ENCODE measurements at regions of chr1 and their contacts with region 1.

Region 1: GRCh38 chr1:63537940-63538339 is 14.6 kb downstream of the EFCAB7 start:
- DNase-seq: peak; percentile 25
- H3K4me3 ChIP-seq: no peak overlapping the region
- H3K27ac ChIP-seq: no peak overlapping the region
- H3K4me1 ChIP-seq: no peaks in the 10 kb centered on the region
- H3K27me3 ChIP-seq: no peaks in the 10 kb centered on the region
- CTCF ChIP-seq: peak; percentile 68

Region 2: GRCh38 chr1:63327417-63328139 is 210.4 kb before region 1 on chr1:
- CTCF ChIA-PET with region 1: no interaction called
- POLR2A ChIA-PET with region 1: no interaction called
- intact Hi-C with region 1: loop called (anchors 10 kb)
- DNase-seq: peak; percentile 84
- H3K4me3 ChIP-seq: no peak overlapping the region
- H3K27ac ChIP-seq: no peak overlapping the region
- H3K4me1 ChIP-seq: no peaks in the 10 kb centered on the region
- H3K27me3 ChIP-seq: no peaks in the 10 kb centered on the region
- CTCF ChIP-seq: peak; percentile 92

Region 3: DNA sequence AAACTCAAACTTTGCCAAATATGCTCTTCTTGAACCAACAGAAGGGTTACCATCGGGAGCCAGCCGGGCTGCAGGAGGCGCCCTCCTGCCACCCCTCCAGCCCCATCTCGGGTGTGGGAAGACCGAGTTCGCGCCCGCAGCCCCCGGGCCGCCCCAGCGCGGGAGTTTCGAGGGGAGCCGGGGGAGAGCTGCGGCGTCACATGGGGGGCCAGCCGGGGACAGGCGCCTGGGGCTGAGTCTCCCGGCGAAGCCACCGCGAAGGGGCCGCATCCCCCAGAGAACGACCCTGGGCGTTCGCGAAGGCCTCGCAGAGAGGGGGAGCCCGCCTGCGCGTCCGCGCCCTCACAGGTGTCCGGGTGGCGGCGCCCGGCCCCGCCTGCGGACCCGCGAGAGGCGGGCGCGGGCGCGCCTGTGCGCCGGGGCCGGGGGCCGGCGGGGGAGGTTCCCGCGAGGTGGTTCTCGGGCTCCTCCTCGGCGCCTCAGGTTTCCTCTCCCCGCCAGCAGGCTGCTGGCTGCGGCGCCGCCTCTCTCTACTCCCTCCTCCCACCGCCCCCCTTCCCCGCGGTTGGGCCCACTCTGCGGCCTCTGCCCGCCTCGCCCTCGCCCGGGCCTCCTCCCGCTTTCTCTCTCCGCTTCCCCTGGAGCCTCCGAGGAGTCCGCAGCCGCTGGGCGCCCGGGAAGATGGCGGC is 1206.7 kb after region 1 on chr1 and contains the start of gene RAVER2:
- CTCF ChIA-PET with region 1: no interaction called
- POLR2A ChIA-PET with region 1: no interaction called
- intact Hi-C with region 1: no loop called
- DNase-seq: peak; percentile 91
- H3K4me3 ChIP-seq: peak within 1 kb of the TSS; percentile 98
- H3K27ac ChIP-seq: peak within 1 kb of the TSS; percentile 93
- H3K4me1 ChIP-seq: peaks cover 28% of the 10 kb centered on the region
- H3K27me3 ChIP-seq: no peaks in the 10 kb centered on the region
- CTCF ChIP-seq: peak; percentile 72
- total RNA-seq, gene RAVER2: 34.1 and 36.5 TPM in 2 replicates